ENCODE measurements at regions of chrX and their contacts with region 1.

Region 1: DNA sequence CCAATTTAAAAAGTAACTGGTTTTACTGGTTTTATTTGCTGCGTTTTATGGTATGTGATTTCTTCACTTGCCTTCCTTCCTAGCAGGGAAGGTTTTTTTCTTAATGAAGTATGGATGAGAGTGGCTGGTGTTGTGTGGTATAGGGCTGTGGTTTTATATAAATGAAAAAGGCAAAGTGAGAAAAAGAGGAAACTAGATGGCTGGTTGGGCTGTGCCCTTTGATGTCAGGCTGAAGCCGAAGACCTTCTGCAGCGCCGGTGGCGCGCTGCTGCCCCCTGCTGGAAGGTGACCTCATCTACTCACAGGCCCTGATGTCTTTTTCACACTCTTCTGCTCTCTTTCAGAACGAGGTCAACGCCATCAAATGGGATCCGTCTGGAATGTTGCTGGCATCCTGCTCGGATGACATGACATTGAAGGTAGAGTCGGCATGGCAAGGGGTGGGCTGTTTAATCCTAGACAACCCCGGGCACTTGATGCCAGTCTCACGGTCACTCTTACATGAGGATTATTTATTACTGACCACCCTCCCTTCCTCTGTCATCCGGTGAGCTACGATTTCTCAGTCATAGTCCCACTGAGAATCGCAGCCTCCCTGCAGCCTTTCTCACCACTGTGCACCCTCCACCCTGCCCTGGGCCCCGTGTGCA is 56.6 kb downstream of the GPR143 start:
- DNase-seq: peak; percentile 62 to 88 (median 76)
- ATAC-seq: peak; percentile 89
- H3K4me3 ChIP-seq: no peak overlapping the region
- H3K4me3 Mint-ChIP-seq: no peak overlapping the region
- H3K27ac ChIP-seq: no peak overlapping the region
- H3K27ac Mint-ChIP-seq: no peak overlapping the region
- H3K4me1 ChIP-seq: peaks cover 6% of the 10 kb centered on the region
- H3K4me1 Mint-ChIP-seq: peaks cover 12% of the 10 kb centered on the region
- H3K27me3 ChIP-seq: no peaks in the 10 kb centered on the region
- H3K27me3 Mint-ChIP-seq: no peaks in the 10 kb centered on the region
- CTCF ChIP-seq: peak; percentile 69

Region 2: DNA sequence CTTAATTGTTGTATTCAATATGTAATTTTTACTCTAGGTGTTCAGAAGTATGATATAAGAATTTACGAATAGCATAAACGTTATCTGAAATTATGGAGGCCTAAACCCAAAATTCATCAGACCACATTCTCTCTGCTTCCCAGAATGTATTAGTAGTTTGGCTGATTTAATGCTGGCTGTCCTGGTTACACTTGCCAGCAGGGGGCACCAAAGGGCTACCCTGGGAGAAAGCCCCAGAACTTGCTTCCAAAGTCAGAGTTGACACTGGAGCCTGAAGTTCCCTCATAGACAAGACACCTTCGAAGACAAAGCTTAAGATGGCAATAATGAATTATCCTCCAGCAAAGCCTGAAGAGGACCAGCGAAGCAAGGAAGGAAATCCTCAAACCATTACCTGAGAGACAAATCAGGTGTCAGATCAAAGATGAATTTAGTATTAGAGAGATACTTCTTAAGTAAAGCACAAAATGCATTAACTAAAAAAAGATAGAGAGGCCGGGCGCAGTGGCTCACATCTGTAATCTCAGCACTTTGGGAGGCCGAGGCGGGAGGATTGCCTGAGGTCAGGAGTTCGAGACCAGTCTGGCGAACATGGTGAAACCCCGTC is 965.8 kb before region 1 on chrX:
- CTCF ChIA-PET with region 1: no interaction called
- POLR2A ChIA-PET with region 1: no interaction called
- intact Hi-C with region 1: loop called in 1 of 2 experiments (anchors 2 kb)
- DNase-seq: peak; percentile 27 to 74 (median 52)
- ATAC-seq: peak; percentile 46
- H3K4me3 ChIP-seq: no peak overlapping the region
- H3K4me3 Mint-ChIP-seq: no peak overlapping the region
- H3K27ac ChIP-seq: no peak overlapping the region
- H3K27ac Mint-ChIP-seq: no peak overlapping the region
- H3K4me1 ChIP-seq: no peaks in the 10 kb centered on the region
- H3K4me1 Mint-ChIP-seq: no peaks in the 10 kb centered on the region
- H3K27me3 ChIP-seq: peaks cover 0 to 2% of the 10 kb centered on the region in 2 experiments
- H3K27me3 Mint-ChIP-seq: peaks cover 11% of the 10 kb centered on the region
- CTCF ChIP-seq: peak; percentile 71

Region 3: GRCh38 chrX:8820910-8821527 is 888.0 kb before region 1 on chrX:
- CTCF ChIA-PET with region 1: interaction called, 3 read pairs
- POLR2A ChIA-PET with region 1: no interaction called
- intact Hi-C with region 1: loop called (anchors 1 to 2 kb)
- DNase-seq: no peak
- ATAC-seq: no peak
- H3K4me3 ChIP-seq: no peak overlapping the region
- H3K4me3 Mint-ChIP-seq: no peak overlapping the region
- H3K27ac ChIP-seq: no peak overlapping the region
- H3K27ac Mint-ChIP-seq: no peak overlapping the region
- H3K4me1 ChIP-seq: no peaks in the 10 kb centered on the region
- H3K4me1 Mint-ChIP-seq: no peaks in the 10 kb centered on the region
- H3K27me3 ChIP-seq: peaks cover 0 to 3% of the 10 kb centered on the region in 2 experiments
- H3K27me3 Mint-ChIP-seq: peaks cover 8% of the 10 kb centered on the region
- CTCF ChIP-seq: no peak

Region 4: GRCh38 chrX:9055354-9055753 is 653.7 kb before region 1 on chrX:
- CTCF ChIA-PET with region 1: no interaction called
- POLR2A ChIA-PET with region 1: no interaction called
- intact Hi-C with region 1: loop called in 1 of 2 experiments (anchors 10 kb)
- DNase-seq: peak in 2 of 14 experiments; percentile 2 to 7
- ATAC-seq: no peak
- H3K4me3 ChIP-seq: no peak overlapping the region
- H3K4me3 Mint-ChIP-seq: no peak overlapping the region
- H3K27ac ChIP-seq: no peak overlapping the region
- H3K27ac Mint-ChIP-seq: no peak overlapping the region
- H3K4me1 ChIP-seq: no peaks in the 10 kb centered on the region
- H3K4me1 Mint-ChIP-seq: no peaks in the 10 kb centered on the region
- H3K27me3 ChIP-seq: no peaks in the 10 kb centered on the region
- H3K27me3 Mint-ChIP-seq: no peaks in the 10 kb centered on the region
- CTCF ChIP-seq: no peak

Region 5: GRCh38 chrX:9586992-9587392 is 122.0 kb before region 1 on chrX:
- CTCF ChIA-PET with region 1: no interaction called
- POLR2A ChIA-PET with region 1: no interaction called
- intact Hi-C with region 1: no loop called
- DNase-seq: no peak
- ATAC-seq: no peak
- H3K4me3 ChIP-seq: no peak overlapping the region
- H3K4me3 Mint-ChIP-seq: no peak overlapping the region
- H3K27ac ChIP-seq: no peak overlapping the region
- H3K27ac Mint-ChIP-seq: no peak overlapping the region
- H3K4me1 ChIP-seq: no peaks in the 10 kb centered on the region
- H3K4me1 Mint-ChIP-seq: peaks cover 35% of the 10 kb centered on the region
- H3K27me3 ChIP-seq: no peaks in the 10 kb centered on the region
- H3K27me3 Mint-ChIP-seq: no peaks in the 10 kb centered on the region
- CTCF ChIP-seq: no peak